AG04449 (cell line): ENCODE measurements at regions of chr17 and their contacts with region 1.

Region 1: DNA sequence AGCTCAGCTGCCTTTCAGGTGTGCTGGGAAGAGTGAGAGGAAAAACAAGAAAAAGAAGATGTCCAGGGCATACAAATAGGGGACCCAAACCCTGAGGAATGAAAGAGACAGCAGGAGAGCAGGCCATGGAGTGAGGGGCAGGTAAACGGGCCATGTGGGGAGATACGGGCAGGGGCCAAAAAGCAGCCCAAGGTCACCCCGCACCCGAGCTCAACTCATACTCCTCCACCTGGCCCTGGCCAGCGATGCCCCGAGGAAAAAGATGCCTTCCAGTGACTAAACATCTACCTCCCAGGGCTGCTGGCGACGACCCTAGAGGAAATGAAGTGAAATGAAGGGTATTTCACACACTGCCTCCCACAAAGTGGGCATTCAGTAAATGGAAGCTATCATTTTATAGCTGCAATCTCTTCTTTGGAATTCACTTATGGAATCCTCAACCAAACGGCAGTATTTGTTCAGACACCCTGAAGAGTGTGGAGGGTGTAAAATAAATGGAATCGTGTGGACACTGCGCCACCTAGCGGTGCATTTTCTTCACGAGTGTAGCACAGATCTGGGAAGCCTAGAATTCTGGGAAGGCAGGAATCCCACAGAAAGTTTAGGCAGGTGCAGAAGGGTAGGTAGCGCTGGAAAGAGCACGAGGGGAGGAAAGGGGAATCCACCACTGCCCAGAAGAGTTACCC is 14.9 kb downstream of the ELAC2 start:
- DNase-seq: peak; percentile 40
- H3K4me3 ChIP-seq: no peak overlapping the region
- CTCF ChIP-seq: peak; percentile 68

Region 2: DNA sequence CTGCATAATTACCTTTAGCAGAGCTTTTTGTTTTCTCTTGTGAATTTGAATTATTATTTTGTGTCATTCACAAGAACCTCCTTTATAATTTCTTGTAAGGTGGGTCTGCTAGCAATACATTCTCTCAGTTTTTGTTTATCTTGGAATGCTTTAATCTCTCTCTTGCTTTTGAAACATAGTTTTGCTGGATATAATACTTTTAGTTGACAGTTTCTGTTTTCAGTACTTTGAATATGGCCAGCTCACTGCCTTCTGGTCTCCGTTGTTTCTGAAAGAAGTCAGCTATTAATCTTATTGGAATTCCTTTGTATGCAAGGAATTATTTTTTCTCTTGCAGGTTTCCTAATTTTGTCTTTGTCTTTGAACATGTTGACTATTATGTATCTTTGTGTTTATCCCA is 815.3 kb before region 1 on chr17:
- CTCF ChIA-PET with region 1: interaction called, 86 read pairs
- POLR2A ChIA-PET with region 1: no interaction called
- DNase-seq: no peak
- H3K4me3 ChIP-seq: no peak overlapping the region
- CTCF ChIP-seq: no peak

Region 3: DNA sequence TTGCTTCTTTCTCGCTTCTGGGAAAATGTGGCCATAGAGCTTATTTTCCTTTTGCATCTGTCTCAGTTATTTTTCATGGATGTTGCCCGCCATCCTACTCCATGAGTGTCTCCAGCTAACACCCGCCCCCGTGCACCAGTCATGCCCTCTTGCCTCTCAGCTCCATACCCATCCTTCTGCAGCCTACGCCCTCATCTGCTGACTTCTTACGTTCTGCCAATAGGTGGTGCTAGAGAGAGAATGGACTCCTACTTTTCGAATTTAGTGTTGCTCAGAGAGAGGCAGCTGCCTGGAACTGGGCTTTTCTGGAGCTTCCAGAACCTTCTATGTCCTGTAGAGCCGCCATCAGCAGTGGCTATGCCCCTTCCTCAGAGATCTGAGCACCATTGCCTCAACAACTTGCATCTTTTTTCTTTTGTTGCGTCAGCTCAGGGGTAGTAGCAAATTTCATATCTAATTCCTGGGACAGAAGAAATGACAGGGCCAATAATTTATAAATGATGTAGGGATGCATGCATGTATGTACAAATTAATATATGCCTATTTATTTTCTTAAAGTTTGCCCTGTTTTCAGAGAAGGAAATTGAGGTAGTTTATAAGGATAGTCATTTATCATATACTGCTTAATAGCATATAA is 456.9 kb before region 1 on chr17:
- CTCF ChIA-PET with region 1: interaction called, 12 read pairs
- POLR2A ChIA-PET with region 1: no interaction called
- DNase-seq: no peak
- H3K4me3 ChIP-seq: no peak overlapping the region
- CTCF ChIP-seq: peak; percentile 83

Region 4: DNA sequence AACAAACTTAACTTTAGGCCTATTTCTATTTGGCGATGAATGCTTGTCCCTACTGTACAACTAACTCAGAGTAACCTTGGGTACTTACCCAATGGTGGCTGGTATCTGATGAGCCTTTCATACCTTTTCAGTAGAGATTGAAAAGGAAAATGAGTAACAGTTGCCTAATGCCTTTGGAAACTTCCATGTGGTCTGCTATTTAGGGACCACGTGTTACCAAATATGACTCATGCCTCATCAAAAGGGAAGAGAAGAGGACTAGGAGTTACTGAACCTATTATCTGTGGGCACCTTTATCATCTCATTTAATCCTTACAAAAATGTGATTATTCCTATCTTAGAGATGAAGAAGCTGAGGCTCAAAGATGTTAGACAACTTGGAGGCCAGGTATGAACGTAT is 329.1 kb before region 1 on chr17:
- CTCF ChIA-PET with region 1: interaction called, 12 read pairs
- POLR2A ChIA-PET with region 1: no interaction called
- DNase-seq: no peak
- H3K4me3 ChIP-seq: no peak overlapping the region
- CTCF ChIP-seq: no peak

Region 5: GRCh38 chr17:12744298-12744697 is 258.6 kb before region 1 on chr17:
- CTCF ChIA-PET with region 1: interaction called, 22 read pairs
- POLR2A ChIA-PET with region 1: no interaction called
- DNase-seq: no peak
- H3K4me3 ChIP-seq: no peak overlapping the region
- CTCF ChIP-seq: no peak

Region 6: GRCh38 chr17:12900474-12900873 is 102.4 kb before region 1 on chr17:
- CTCF ChIA-PET with region 1: no interaction called
- POLR2A ChIA-PET with region 1: no interaction called
- DNase-seq: no peak
- H3K4me3 ChIP-seq: no peak overlapping the region
- CTCF ChIP-seq: no peak

Region 7: GRCh38 chr17:12990041-12990808 is 12.7 kb before region 1 on chr17:
- CTCF ChIA-PET with region 1: interaction called, 69 read pairs
- POLR2A ChIA-PET with region 1: no interaction called
- DNase-seq: no peak
- H3K4me3 ChIP-seq: no peak overlapping the region
- CTCF ChIP-seq: no peak